Activated T-helper 2 cell treated with anti-CD3 and anti-CD28 coated beads, Interferon-gamma antibody, Interleukin-2, Interleukin-4, amounts not matched to agents 10 μg/mL and 5 μg/mL and 100 μg/mL, durations not matched to agents 14 hours and 24 hours and 36 hours (primary cell): ENCODE measurements at regions of chr21 and their contacts with region 1.

Region 1: GRCh38 chr21:42258153-42258884 is 39.4 kb downstream of the ABCG1 start:
- DNase-seq: peak; percentile 70
- H3K4me3 Mint-ChIP-seq: no peak overlapping the region
- H3K27ac Mint-ChIP-seq: no peak overlapping the region
- H3K4me1 Mint-ChIP-seq: peaks cover 10% of the 10 kb centered on the region
- H3K27me3 Mint-ChIP-seq: no peaks in the 10 kb centered on the region

Region 2: DNA sequence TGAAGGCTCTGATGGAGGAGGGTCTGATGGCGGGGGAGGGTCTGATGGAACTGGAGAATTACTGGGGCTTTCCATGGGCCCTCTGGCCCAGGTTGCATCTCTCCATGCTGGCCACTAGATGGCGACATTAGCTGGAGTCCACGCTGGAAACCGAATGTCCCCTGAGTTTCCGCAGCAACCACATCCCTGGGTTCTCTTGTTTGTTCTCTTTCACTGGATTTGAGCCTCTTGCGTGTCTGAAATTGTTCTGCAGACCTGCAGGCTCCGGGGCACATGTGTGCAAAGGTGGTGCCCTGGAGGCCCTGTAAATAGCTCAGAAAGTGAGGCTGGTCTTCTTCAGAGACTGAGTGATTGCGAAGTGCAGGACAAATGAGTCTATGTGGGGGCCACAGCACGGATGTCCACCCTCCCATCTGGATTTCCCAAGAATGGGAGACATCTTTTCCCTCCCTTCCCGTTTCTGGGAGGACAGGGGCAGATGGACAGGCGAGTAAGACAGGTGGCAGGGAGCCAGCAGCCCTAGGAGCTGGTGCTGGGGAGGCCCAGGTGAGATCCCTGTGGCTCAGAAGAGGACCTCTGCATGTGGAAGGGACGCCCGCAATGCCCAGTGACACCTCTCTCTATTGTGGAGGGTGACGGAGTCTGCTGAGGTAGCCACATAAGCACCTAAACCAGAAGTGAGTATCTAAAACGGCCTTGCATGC is 112.6 kb before region 1 on chr21:
- intact Hi-C with region 1: loop called (anchors 1 kb)
- DNase-seq: peak; percentile 58
- H3K4me3 Mint-ChIP-seq: no peak overlapping the region
- H3K27ac Mint-ChIP-seq: no peak overlapping the region
- H3K4me1 Mint-ChIP-seq: peaks cover 6% of the 10 kb centered on the region
- H3K27me3 Mint-ChIP-seq: peaks cover 3% of the 10 kb centered on the region

Region 3: GRCh38 chr21:42164064-42164789 is 94.1 kb before region 1 on chr21:
- intact Hi-C with region 1: loop called (anchors 1 kb)
- DNase-seq: peak; percentile 35
- H3K4me3 Mint-ChIP-seq: no peak overlapping the region
- H3K27ac Mint-ChIP-seq: no peak overlapping the region
- H3K4me1 Mint-ChIP-seq: peaks cover 21% of the 10 kb centered on the region
- H3K27me3 Mint-ChIP-seq: peaks cover under 1% of the 10 kb centered on the region

Region 4: DNA sequence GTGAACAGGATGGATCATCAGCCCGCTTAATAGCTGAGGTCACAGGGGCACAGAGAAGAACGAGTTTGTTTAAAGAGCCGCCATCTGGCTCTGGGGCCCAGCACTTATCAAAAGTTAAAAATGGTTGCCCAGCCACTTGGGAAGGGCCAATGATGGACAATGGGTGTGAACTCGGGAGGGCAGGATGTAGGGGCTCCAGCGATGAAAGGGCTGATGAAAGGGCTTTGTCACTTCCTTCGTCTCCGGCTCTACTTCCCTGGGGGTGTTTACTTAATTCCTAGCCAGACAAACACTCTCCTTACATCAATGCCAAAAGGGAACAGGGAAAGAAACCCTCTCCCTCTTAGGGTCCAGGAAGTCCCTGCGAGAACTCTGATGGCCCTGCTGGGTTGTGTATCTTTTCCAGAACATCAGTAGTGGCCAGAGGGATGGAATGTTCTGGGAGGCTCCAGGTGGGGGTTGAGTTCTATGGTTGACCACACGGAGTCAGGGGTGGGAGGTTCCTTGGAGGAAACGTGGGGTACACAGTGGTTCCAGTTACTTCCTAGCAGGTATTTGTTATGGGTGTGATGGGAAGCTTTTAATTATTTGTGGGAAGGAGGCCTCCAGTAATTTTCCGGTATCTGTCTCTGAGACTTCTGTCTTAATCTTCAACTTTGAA is 48.4 kb before region 1 on chr21:
- intact Hi-C with region 1: no loop called
- DNase-seq: no peak
- H3K4me3 Mint-ChIP-seq: no peak overlapping the region
- H3K27ac Mint-ChIP-seq: no peak overlapping the region
- H3K4me1 Mint-ChIP-seq: peaks cover 2% of the 10 kb centered on the region
- H3K27me3 Mint-ChIP-seq: peaks cover 26% of the 10 kb centered on the region

Region 5: GRCh38 chr21:42319851-42320572 is 61.7 kb after region 1 on chr21:
- intact Hi-C with region 1: loop called (anchors 10 kb)
- DNase-seq: no peak
- H3K4me3 Mint-ChIP-seq: no peak overlapping the region
- H3K27ac Mint-ChIP-seq: no peak overlapping the region
- H3K4me1 Mint-ChIP-seq: peaks cover 5% of the 10 kb centered on the region
- H3K27me3 Mint-ChIP-seq: peaks cover 13% of the 10 kb centered on the region